Activated T-helper 2 cell treated with anti-CD3 and anti-CD28 coated beads, Interferon-gamma antibody, Interleukin-2, Interleukin-4, amounts not matched to agents 10 μg/mL and 5 μg/mL and 100 μg/mL, durations not matched to agents 14 hours and 24 hours and 36 hours (primary cell): ENCODE measurements at regions of chr12 and their contacts with region 1.

Region 1: GRCh38 chr12:80269803-80270552 is 170.6 kb downstream of the OTOGL start:
- DNase-seq: no peak
- H3K4me3 Mint-ChIP-seq: no peak overlapping the region
- H3K27ac Mint-ChIP-seq: no peak overlapping the region
- H3K4me1 Mint-ChIP-seq: no peaks in the 10 kb centered on the region
- H3K27me3 Mint-ChIP-seq: peaks cover under 1% of the 10 kb centered on the region

Region 2: GRCh38 chr12:80192087-80192486 is 77.9 kb before region 1 on chr12:
- intact Hi-C with region 1: loop called (anchors 5 kb)
- DNase-seq: no peak
- H3K4me3 Mint-ChIP-seq: no peak overlapping the region
- H3K27ac Mint-ChIP-seq: no peak overlapping the region
- H3K4me1 Mint-ChIP-seq: no peaks in the 10 kb centered on the region
- H3K27me3 Mint-ChIP-seq: peaks cover 15% of the 10 kb centered on the region

Region 3: GRCh38 chr12:80299976-80300375 is 30.0 kb after region 1 on chr12:
- intact Hi-C with region 1: no loop called
- DNase-seq: no peak
- H3K4me3 Mint-ChIP-seq: no peak overlapping the region
- H3K27ac Mint-ChIP-seq: no peak overlapping the region
- H3K4me1 Mint-ChIP-seq: no peaks in the 10 kb centered on the region
- H3K27me3 Mint-ChIP-seq: no peaks in the 10 kb centered on the region

Region 4: GRCh38 chr12:80412369-80412953 is 142.5 kb after region 1 on chr12:
- intact Hi-C with region 1: no loop called
- DNase-seq: no peak
- H3K4me3 Mint-ChIP-seq: no peak overlapping the region
- H3K27ac Mint-ChIP-seq: no peak overlapping the region
- H3K4me1 Mint-ChIP-seq: no peaks in the 10 kb centered on the region
- H3K27me3 Mint-ChIP-seq: no peaks in the 10 kb centered on the region